ENCODE measurements at regions of chr9 and their contacts with region 1.

Region 1: GRCh38 chr9:126857261-126857960 is 3.0 kb upstream of the ZBTB34 start:
- DNase-seq: no peak
- ATAC-seq: no peak
- H3K4me3 ChIP-seq: no peak overlapping the region
- H3K27ac ChIP-seq: no peak overlapping the region
- H3K4me1 ChIP-seq: peaks cover 4 to 21% (median 18%) of the 10 kb centered on the region in 9 donors
- H3K27me3 ChIP-seq: peaks cover 0 to 11% (median 0%) of the 10 kb centered on the region in 7 donors
- CTCF ChIP-seq: no peak

Region 2: GRCh38 chr9:126914458-126915280 is 57.3 kb after region 1 on chr9 and contains the start of gene RALGPS1:
- intact Hi-C with region 1: loop called in 1 of 10 experiments (anchors 5 kb)
- DNase-seq: peak; percentile 96 to 97
- ATAC-seq: peak; percentile 98 to 100 (median 99)
- H3K4me3 ChIP-seq: peak within 1 kb of the TSS; percentile 25 to 83 (median 51)
- H3K27ac ChIP-seq: peak within 1 kb of the TSS; percentile 13 to 88 (median 78)
- H3K4me1 ChIP-seq: peaks cover 0 to 13% (median 6%) of the 10 kb centered on the region in 9 donors
- H3K27me3 ChIP-seq: peaks cover 0 to 10% (median 0%) of the 10 kb centered on the region in 7 donors
- CTCF ChIP-seq: peak in 1 of 9 donors; percentile 6
- total RNA-seq, gene RALGPS1: 13.5 to 25.0 (median 17.0) TPM

Region 3: GRCh38 chr9:126956917-126957686 is 99.7 kb after region 1 on chr9:
- intact Hi-C with region 1: no loop called
- DNase-seq: peak in 1 of 2 donors; percentile 38
- ATAC-seq: peak; percentile 56 to 74 (median 66)
- H3K4me3 ChIP-seq: no peak overlapping the region
- H3K27ac ChIP-seq: peak overlapping the region; percentile 24 to 90 (median 84)
- H3K4me1 ChIP-seq: peaks cover 3 to 57% (median 18%) of the 10 kb centered on the region in 9 donors
- H3K27me3 ChIP-seq: no peaks in the 10 kb centered on the region
- CTCF ChIP-seq: no peak

Measured in heart right ventricle (tissue), 16 donors.